ENCODE measurements at regions of chr4 and their contacts with region 1.

Region 1: DNA sequence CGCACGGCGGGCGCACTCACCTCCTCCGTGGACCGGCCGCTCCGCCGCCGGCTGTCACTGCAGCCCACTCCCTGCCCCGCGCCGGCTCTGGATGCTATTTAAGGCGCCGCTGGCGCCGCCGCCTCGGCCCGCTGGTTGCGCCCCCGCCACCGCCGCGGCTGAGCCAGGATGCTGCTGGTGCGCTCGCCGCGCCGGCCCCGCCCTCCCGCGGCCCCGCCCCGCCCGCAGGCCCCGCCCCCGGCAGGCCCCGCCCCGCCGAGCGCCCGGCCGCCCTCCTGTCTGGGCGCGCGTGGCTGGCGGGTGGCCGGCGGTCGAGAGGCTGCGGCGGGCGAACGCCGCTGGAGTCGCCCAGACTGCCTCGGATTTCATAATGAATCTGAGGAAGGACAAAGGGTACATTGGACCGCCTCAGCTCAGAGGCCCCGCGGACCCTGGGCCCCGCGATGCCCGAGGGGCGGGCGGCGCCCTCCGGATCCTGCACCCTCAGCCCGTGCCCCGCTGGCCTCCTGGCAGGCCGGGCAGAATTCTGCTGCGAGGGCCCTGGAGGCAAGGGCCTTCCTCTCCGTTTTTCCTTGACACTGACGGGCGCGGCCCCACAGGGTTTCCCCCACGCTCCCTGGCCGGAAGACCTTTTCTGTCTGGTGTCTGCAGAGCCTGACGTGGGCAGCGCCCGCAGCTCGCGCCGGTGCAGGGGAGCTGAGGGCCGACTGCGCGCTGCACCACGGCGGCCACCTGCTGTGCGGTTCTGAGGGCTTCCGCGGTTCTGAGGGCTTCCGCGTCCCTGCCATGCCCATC is at the start of gene ACSL1:
- DNase-seq: peak; percentile 93
- H3K4me3 Mint-ChIP-seq: peak within 1 kb of the TSS; percentile 94
- H3K27ac Mint-ChIP-seq: peak within 1 kb of the TSS; percentile 97
- H3K4me1 Mint-ChIP-seq: peaks cover 33% of the 10 kb centered on the region
- H3K27me3 Mint-ChIP-seq: peaks cover 11% of the 10 kb centered on the region
- total RNA-seq, gene ACSL1: 38.3 and 41.7 TPM in 2 replicates

Region 2: GRCh38 chr4:184474263-184475095 is 351.6 kb before region 1 on chr4 and contains the start of gene IRF2:
- intact Hi-C with region 1: loop called (anchors 10 kb)
- DNase-seq: peak; percentile 98
- H3K4me3 Mint-ChIP-seq: peak within 1 kb of the TSS; percentile 99
- H3K27ac Mint-ChIP-seq: peak within 1 kb of the TSS; percentile 98
- H3K4me1 Mint-ChIP-seq: peaks cover 52% of the 10 kb centered on the region
- H3K27me3 Mint-ChIP-seq: no peaks in the 10 kb centered on the region
- total RNA-seq, gene IRF2: 48.7 and 50.0 TPM in 2 replicates

Region 3: DNA sequence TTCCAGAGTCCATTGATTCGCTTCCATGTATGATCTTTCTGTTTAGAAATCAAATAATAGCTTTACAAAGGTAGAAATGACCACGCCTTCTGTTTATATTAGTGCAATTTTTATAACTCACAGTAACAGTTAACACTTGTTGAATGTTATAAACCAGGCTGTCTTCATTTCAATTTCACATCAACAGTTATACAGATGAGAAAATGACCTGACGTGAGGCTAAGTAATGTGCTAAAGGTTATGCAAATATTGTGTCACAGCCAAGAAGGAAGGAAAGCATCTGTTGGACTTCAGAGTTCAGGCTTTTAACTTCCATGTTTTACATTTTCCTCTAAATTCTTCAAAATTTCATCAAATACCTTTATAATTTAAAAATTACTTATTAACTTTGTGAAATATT is 190.7 kb before region 1 on chr4:
- intact Hi-C with region 1: no loop called
- DNase-seq: no peak
- H3K4me3 Mint-ChIP-seq: no peak overlapping the region
- H3K27ac Mint-ChIP-seq: no peak overlapping the region
- H3K4me1 Mint-ChIP-seq: peaks cover 32% of the 10 kb centered on the region
- H3K27me3 Mint-ChIP-seq: no peaks in the 10 kb centered on the region

Region 4: DNA sequence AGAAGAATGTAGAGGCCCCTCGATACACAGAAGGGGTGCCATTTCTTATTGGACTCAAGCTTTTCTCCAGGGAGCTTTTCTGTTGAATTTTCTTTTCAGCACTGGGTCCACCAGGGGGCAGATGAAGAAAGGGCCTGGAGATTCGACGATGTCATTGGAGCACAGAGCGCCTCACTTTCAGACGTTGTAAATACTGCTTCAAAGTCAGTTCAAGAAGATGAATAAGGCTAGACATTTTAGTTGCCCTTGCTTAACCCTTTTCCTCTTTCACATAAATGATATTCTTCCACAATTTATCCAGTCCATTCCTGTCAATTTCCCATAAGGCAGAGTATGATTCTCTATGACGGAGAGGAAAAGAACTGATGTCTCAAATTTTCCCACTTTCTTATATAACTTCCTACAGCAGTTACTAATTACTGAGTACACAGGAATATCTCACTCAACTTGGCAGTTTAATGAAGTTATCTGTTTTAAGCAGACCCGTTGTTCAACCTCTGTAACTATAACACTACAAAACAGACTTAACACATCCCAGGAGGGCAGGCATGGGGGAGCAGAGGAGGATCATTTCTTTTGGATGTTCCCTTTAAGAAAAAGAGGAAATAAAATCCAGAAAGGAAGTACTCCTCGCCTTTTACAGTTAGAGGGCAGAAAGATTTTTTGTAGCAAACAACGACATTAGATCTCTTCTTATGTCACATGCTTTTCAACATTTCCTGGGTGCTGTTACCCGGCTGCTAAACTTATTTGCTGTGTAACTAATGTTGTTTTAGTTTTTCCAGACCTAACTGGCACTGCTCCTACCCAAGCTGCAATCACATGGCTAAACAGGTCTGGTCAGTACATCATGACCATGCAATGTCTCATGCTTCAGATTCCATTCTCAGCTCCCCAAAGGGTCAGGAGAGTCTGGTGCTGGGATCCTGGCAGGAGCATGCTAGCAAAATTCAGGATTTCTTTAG is 80.0 kb before region 1 on chr4:
- intact Hi-C with region 1: loop called (anchors 5 kb)
- DNase-seq: peak; percentile 93
- H3K4me3 Mint-ChIP-seq: peak overlapping the region; percentile 15
- H3K27ac Mint-ChIP-seq: peak overlapping the region; percentile 32
- H3K4me1 Mint-ChIP-seq: peaks cover 10% of the 10 kb centered on the region
- H3K27me3 Mint-ChIP-seq: peaks cover 1% of the 10 kb centered on the region

Region 5: GRCh38 chr4:184851200-184851541 is 25.1 kb after region 1 on chr4:
- intact Hi-C with region 1: loop called (anchors 1 kb)
- DNase-seq: peak; percentile 80
- H3K4me3 Mint-ChIP-seq: no peak overlapping the region
- H3K27ac Mint-ChIP-seq: no peak overlapping the region
- H3K4me1 Mint-ChIP-seq: peaks cover 34% of the 10 kb centered on the region
- H3K27me3 Mint-ChIP-seq: peaks cover 10% of the 10 kb centered on the region

Region 6: DNA sequence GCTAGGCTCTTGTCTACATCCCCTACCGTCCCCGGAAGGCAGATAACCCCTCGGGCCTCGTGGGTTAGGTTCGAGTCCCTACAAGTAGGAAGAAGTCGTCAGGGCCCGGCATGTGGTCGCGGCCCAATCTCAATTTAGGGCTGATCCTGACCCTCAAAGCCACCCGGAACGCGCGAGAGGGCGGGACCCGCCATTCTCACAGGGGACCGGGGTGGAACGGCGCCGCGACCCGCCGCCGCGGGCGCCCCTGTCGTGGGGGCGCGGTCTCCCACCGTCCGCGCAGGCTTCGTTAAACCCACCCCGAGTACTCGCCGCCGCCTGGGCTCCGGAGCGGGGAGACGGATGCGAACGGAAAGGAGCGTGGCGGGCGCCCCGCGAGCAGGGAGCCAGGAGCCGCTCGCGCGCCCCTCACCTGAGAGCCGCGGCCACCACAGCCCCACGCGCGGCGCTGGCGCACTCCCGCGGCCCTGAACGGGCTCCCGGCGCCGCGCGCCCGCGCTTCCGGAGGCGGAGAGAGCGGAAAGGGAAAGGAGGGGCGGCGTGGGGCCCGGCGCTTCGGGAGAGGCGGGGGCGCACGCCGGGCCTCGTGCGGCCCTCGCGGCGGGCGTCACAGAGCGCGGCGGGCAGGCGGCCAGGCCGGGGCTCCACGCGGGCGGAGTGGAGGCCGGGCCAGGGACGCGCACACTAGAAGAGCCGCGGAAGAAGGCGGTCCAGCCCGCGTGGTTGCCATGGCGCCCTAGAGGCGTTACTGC is 377.6 kb after region 1 on chr4 and contains the start of gene CFAP97:
- intact Hi-C with region 1: loop called (anchors 5 kb)
- DNase-seq: peak; percentile 95
- H3K4me3 Mint-ChIP-seq: peak within 1 kb of the TSS; percentile 97
- H3K27ac Mint-ChIP-seq: peak within 1 kb of the TSS; percentile 99
- H3K4me1 Mint-ChIP-seq: peaks cover 36% of the 10 kb centered on the region
- H3K27me3 Mint-ChIP-seq: no peaks in the 10 kb centered on the region
- total RNA-seq, gene CFAP97: 56.6 and 59.3 TPM in 2 replicates

Measured in activated CD4-positive, alpha-beta T cell treated with anti-CD3 and anti-CD28 coated beads, Interleukin-2, amount 10 ng/mL, durations not matched to agents 24 days and 14 days (primary cell).